ENCODE measurements at regions of chr22 and their contacts with region 1.

Region 1: GRCh38 chr22:31290494-31291471 is 1.5 kb downstream of the PIK3IP1 start:
- DNase-seq: peak; percentile 95 to 96
- ATAC-seq: peak; percentile 70 to 81
- H3K4me3 ChIP-seq: peak overlapping the region; percentile 56 to 89 (median 72)
- H3K27ac ChIP-seq: peak overlapping the region; percentile 91 to 100 (median 97)
- H3K4me1 ChIP-seq: peaks cover 42 to 48% of the 10 kb centered on the region in 2 donors
- H3K27me3 ChIP-seq: no peaks in the 10 kb centered on the region
- CTCF ChIP-seq: peak in 1 of 5 experiments; percentile 8
- POLR2A ChIP-seq: peak; percentile 98 to 100

Region 2: GRCh38 chr22:31080848-31081649 is 209.7 kb before region 1 on chr22 and contains the start of gene SMTN:
- in situ Hi-C with region 1: no loop called
- intact Hi-C with region 1: loop called (anchors 5 kb)
- DNase-seq: peak; percentile 83 to 88
- ATAC-seq: peak; percentile 82 to 83
- H3K4me3 ChIP-seq: peak within 1 kb of the TSS; percentile 60 to 78 (median 73)
- H3K27ac ChIP-seq: peak within 1 kb of the TSS; percentile 85 to 93 (median 92)
- H3K4me1 ChIP-seq: peaks cover 13 to 49% of the 10 kb centered on the region in 2 donors
- H3K27me3 ChIP-seq: no peaks in the 10 kb centered on the region
- CTCF ChIP-seq: no peak
- POLR2A ChIP-seq: peak; percentile 87 to 95
- total RNA-seq, gene SMTN: 39.5 to 104 (median 45.3) TPM

Region 3: GRCh38 chr22:31160328-31160978 is 130.3 kb before region 1 on chr22:
- in situ Hi-C with region 1: no loop called
- intact Hi-C with region 1: loop called (anchors 5 kb)
- DNase-seq: no peak
- ATAC-seq: peak; percentile 60 to 64
- H3K4me3 ChIP-seq: peak overlapping the region; percentile 72 to 98 (median 87)
- H3K27ac ChIP-seq: peak overlapping the region; percentile 95 to 99 (median 97)
- H3K4me1 ChIP-seq: peaks cover 24 to 38% of the 10 kb centered on the region in 2 donors
- H3K27me3 ChIP-seq: no peaks in the 10 kb centered on the region
- CTCF ChIP-seq: no peak
- POLR2A ChIP-seq: no peak

Region 4: GRCh38 chr22:31272522-31273446 is 18.0 kb before region 1 on chr22:
- in situ Hi-C with region 1: no loop called
- intact Hi-C with region 1: no loop called
- DNase-seq: peak; percentile 29 to 43
- ATAC-seq: peak; percentile 73 to 94
- H3K4me3 ChIP-seq: no peak overlapping the region
- H3K27ac ChIP-seq: no peak overlapping the region
- H3K4me1 ChIP-seq: no peaks in the 10 kb centered on the region
- H3K27me3 ChIP-seq: no peaks in the 10 kb centered on the region
- CTCF ChIP-seq: peak; percentile 26 to 79 (median 70)
- POLR2A ChIP-seq: no peak

Region 5: GRCh38 chr22:31345331-31346254 is 54.8 kb after region 1 on chr22:
- in situ Hi-C with region 1: no loop called
- intact Hi-C with region 1: loop called (anchors 2 kb)
- DNase-seq: peak; percentile 47 to 78
- ATAC-seq: peak; percentile 79 to 83
- H3K4me3 ChIP-seq: peak overlapping the region; percentile 79 to 98 (median 83)
- H3K27ac ChIP-seq: peak overlapping the region; percentile 80 to 86 (median 83)
- H3K4me1 ChIP-seq: peaks cover 24 to 42% of the 10 kb centered on the region in 2 donors
- H3K27me3 ChIP-seq: no peaks in the 10 kb centered on the region
- CTCF ChIP-seq: peak; percentile 76 to 97 (median 94)
- POLR2A ChIP-seq: peak; percentile 30 to 36

Region 6: DNA sequence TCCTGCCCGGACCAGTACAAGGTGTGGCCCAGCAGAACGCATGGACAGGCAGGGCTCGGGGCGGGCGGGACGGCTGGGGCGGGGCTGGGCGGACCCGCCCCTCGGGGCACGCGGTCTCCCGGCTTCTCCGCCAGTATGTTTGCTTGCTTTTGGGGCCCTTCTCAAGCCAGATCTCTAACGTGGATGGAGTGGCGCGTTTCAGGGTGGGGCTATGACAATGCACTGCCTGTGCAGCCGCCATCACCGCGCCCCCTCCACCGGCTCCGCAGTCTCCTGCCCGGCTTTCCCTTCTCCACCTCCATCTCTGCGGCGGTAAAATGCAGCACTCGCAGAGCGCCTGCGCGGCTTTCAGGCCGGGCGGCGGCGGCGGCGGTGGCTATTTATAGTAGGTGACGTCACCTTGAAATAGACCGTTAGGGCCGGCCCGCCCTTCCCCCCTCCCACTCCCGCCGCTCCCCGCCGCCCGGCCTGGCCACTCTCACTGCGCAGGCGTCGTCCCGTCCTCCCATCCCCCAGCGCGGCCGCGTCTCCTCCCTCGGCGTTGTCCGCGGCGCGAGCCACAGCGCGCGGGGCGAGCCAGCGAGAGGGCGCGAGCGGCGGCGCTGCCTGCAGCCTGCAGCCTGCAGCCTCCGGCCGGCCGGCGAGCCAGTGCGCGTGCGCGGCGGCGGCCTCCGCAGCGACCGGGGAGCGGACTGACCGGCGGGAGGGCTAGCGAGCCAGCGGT is 653.4 kb after region 1 on chr22 and contains the start of gene YWHAH:
- in situ Hi-C with region 1: no loop called
- intact Hi-C with region 1: loop called (anchors 5 kb)
- DNase-seq: peak; percentile 94 to 95
- ATAC-seq: peak; percentile 90 to 91
- H3K4me3 ChIP-seq: peak within 1 kb of the TSS; percentile 63 to 94 (median 80)
- H3K27ac ChIP-seq: peak within 1 kb of the TSS; percentile 86 to 97 (median 94)
- H3K4me1 ChIP-seq: peaks cover 9 to 19% of the 10 kb centered on the region in 2 donors
- H3K27me3 ChIP-seq: no peaks in the 10 kb centered on the region
- CTCF ChIP-seq: peak in 1 of 5 experiments; percentile 19
- POLR2A ChIP-seq: peak; percentile 95 to 96
- total RNA-seq, gene YWHAH: 26.6 to 65.8 (median 45.7) TPM

Measured in gastrocnemius medialis (tissue), 4 donors.